Activated T-helper 1 cell treated with anti-CD3 and anti-CD28 coated beads, Interleukin-12 subunit alpha, Interleukin-12 subunit beta, Interleukin-2, Interleukin-4 antibody, amounts not matched to agents 30 ng/mL and 10 ng/mL and 1 ng/mL, durations not matched to agents 14 hours and 24 hours and 36 hours (primary cell): ENCODE measurements at regions of chr10 and their contacts with region 1.

Region 1: GRCh38 chr10:29998142-29998808 is 61.1 kb downstream of the JCAD start:
- DNase-seq: peak; percentile 69
- H3K4me3 Mint-ChIP-seq: no peak overlapping the region
- H3K27ac Mint-ChIP-seq: no peak overlapping the region
- H3K4me1 Mint-ChIP-seq: peaks cover 20% of the 10 kb centered on the region
- H3K27me3 Mint-ChIP-seq: peaks cover 33% of the 10 kb centered on the region

Region 2: GRCh38 chr10:30048768-30049517 is 50.7 kb after region 1 on chr10:
- intact Hi-C with region 1: loop called (anchors 5 kb)
- DNase-seq: no peak
- H3K4me3 Mint-ChIP-seq: peak overlapping the region; percentile 41
- H3K27ac Mint-ChIP-seq: no peak overlapping the region
- H3K4me1 Mint-ChIP-seq: peaks cover 23% of the 10 kb centered on the region
- H3K27me3 Mint-ChIP-seq: peaks cover 42% of the 10 kb centered on the region

Region 3: GRCh38 chr10:30178565-30178964 is 180.3 kb after region 1 on chr10:
- intact Hi-C with region 1: no loop called
- DNase-seq: no peak
- H3K4me3 Mint-ChIP-seq: no peak overlapping the region
- H3K27ac Mint-ChIP-seq: no peak overlapping the region
- H3K4me1 Mint-ChIP-seq: no peaks in the 10 kb centered on the region
- H3K27me3 Mint-ChIP-seq: peaks cover 12% of the 10 kb centered on the region

Region 4: GRCh38 chr10:30241422-30242110 is 243.3 kb after region 1 on chr10:
- intact Hi-C with region 1: loop called (anchors 1 kb)
- DNase-seq: no peak
- H3K4me3 Mint-ChIP-seq: no peak overlapping the region
- H3K27ac Mint-ChIP-seq: no peak overlapping the region
- H3K4me1 Mint-ChIP-seq: peaks cover 7% of the 10 kb centered on the region
- H3K27me3 Mint-ChIP-seq: peaks cover 15% of the 10 kb centered on the region

Region 5: GRCh38 chr10:30384701-30385201 is 386.5 kb after region 1 on chr10:
- intact Hi-C with region 1: loop called (anchors 1 kb)
- DNase-seq: no peak
- H3K4me3 Mint-ChIP-seq: no peak overlapping the region
- H3K27ac Mint-ChIP-seq: no peak overlapping the region
- H3K4me1 Mint-ChIP-seq: no peaks in the 10 kb centered on the region
- H3K27me3 Mint-ChIP-seq: peaks cover 28% of the 10 kb centered on the region

Region 6: GRCh38 chr10:30534465-30535144 is 536.3 kb after region 1 on chr10:
- intact Hi-C with region 1: loop called (anchors 1 kb)
- DNase-seq: peak; percentile 58
- H3K4me3 Mint-ChIP-seq: no peak overlapping the region
- H3K27ac Mint-ChIP-seq: peak overlapping the region; percentile 2
- H3K4me1 Mint-ChIP-seq: peaks cover 49% of the 10 kb centered on the region
- H3K27me3 Mint-ChIP-seq: no peaks in the 10 kb centered on the region